IMR-90 (cell line): ENCODE measurements at regions of chr7 and their contacts with region 1.

Region 1: GRCh38 chr7:916291-916941 is 38.1 kb downstream of the ADAP1 start:
- DNase-seq: no peak
- ATAC-seq: peak; percentile 29; the same call in 1 of the 2 replicates
- H3K4me3 ChIP-seq: no peak overlapping the region
- H3K27ac ChIP-seq: no peak overlapping the region
- H3K4me1 ChIP-seq: no peaks in the 10 kb centered on the region
- H3K27me3 ChIP-seq: no peaks in the 10 kb centered on the region
- CTCF ChIP-seq: no peak
- POLR2A ChIP-seq: no peak
- RAD21 ChIP-seq: no peak

Region 2: GRCh38 chr7:305410-306151 is 610.8 kb before region 1 on chr7:
- CTCF ChIA-PET with region 1: no interaction called
- POLR2A ChIA-PET with region 1: no interaction called
- dilution Hi-C with region 1: no loop called
- in situ Hi-C with region 1: no loop called
- intact Hi-C with region 1: no loop called
- DNase-seq: no peak
- ATAC-seq: no peak
- H3K4me3 ChIP-seq: no peak overlapping the region
- H3K27ac ChIP-seq: no peak overlapping the region
- H3K4me1 ChIP-seq: no peaks in the 10 kb centered on the region
- H3K27me3 ChIP-seq: peaks cover 18% of the 10 kb centered on the region
- CTCF ChIP-seq: no peak
- POLR2A ChIP-seq: no peak
- RAD21 ChIP-seq: no peak

Region 3: DNA sequence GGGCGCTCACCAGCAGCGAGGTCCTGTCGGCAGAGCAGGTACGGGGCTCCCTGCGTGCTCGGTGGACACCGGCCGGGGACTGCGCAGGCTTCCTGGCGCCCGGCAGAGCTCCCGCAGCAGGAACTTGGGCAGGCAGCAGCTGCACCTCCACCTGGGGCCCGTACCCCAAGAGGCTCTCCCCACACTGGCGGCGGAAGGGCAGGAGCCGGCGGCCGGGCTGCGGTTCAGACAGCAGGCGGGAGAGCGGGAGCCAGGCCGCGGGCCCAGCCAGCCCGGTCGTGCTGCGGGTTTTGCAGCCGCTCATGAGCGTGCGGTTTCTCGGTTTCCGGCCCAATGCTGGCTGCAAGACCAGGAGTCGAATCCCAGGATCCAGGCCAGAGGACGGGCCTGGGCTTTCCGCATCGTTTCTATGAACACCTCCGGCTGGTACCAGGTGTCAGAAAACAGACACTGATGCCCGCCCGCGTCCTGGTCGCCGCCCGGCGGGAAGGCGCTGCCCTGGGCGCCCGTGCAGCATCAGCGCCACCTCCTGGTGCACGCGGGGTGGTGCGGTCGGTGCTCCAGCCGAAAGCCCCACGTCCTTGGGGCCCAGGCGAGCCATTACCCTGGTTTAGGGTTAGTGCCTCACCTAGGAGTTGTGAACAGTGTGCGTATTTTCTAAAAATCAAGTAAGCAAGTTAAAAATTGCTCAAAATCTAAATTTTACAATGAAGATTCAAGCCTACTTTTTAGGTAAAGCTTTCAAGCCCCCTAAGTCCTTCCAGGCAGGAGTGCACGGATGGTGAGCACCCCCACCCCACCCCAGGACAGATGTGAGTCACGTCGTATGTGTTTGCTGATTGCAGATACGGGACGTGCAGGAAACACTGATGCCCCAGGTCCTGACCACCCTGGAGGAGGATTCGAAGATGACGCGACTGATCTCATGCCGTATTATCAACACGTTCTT is 142.0 kb before region 1 on chr7:
- CTCF ChIA-PET with region 1: no interaction called
- POLR2A ChIA-PET with region 1: no interaction called
- dilution Hi-C with region 1: no loop called
- in situ Hi-C with region 1: no loop called
- intact Hi-C with region 1: no loop called
- DNase-seq: peak; percentile 20
- ATAC-seq: peak; percentile 89
- H3K4me3 ChIP-seq: no peak overlapping the region
- H3K27ac ChIP-seq: no peak overlapping the region
- H3K4me1 ChIP-seq: peaks cover 10% of the 10 kb centered on the region
- H3K27me3 ChIP-seq: no peaks in the 10 kb centered on the region
- CTCF ChIP-seq: peak; percentile 95
- POLR2A ChIP-seq: peak; percentile 36; the same call in 1 of the 2 replicates
- RAD21 ChIP-seq: peak; percentile 95

Region 4: DNA sequence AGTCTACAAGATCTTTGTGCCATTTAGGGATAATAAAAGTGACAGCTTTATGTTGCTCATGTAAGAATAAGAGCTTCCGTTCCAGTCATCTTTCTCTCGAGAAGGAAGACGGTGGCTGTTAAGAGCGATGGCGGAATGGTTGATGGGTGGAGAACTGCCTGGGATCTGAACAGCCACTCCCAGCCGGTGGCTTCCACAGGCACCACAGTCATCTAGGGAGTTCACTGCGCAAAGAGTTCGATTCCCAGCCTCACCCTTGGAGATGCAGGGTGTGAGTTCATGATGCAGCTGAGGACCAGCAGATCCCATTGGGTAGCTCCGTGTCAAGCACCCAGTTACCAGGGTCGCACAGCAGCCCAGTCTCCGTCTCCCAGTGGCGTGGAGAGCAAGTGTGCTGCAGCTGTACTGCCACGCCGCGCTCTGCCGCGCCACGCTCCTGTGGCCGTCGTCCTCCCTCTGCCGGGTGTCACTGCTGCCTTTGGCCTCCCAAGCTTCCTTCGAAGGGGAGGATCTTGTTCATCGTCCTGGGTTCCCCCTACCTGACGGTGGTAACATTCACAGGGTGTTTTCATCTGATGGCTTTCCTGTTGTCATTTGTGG is 76.3 kb before region 1 on chr7:
- CTCF ChIA-PET with region 1: no interaction called
- POLR2A ChIA-PET with region 1: interaction called, 10 read pairs
- dilution Hi-C with region 1: no loop called
- in situ Hi-C with region 1: no loop called
- intact Hi-C with region 1: no loop called
- DNase-seq: no peak
- ATAC-seq: no peak
- H3K4me3 ChIP-seq: no peak overlapping the region
- H3K27ac ChIP-seq: no peak overlapping the region
- H3K4me1 ChIP-seq: peaks cover 5% of the 10 kb centered on the region; the same call in 1 of the 2 replicates
- H3K27me3 ChIP-seq: no peaks in the 10 kb centered on the region
- CTCF ChIP-seq: no peak
- POLR2A ChIP-seq: no peak
- RAD21 ChIP-seq: no peak